ENCODE measurements at regions of chr5 and their contacts with region 1.

Region 1: GRCh38 chr5:110838965-110839364 is 100.2 kb downstream of the SLC25A46 start:
- DNase-seq: no peak
- H3K4me3 ChIP-seq: no peak overlapping the region
- H3K27ac ChIP-seq: no peak overlapping the region
- H3K4me1 ChIP-seq: no peaks in the 10 kb centered on the region
- CTCF ChIP-seq: no peak

Region 2: DNA sequence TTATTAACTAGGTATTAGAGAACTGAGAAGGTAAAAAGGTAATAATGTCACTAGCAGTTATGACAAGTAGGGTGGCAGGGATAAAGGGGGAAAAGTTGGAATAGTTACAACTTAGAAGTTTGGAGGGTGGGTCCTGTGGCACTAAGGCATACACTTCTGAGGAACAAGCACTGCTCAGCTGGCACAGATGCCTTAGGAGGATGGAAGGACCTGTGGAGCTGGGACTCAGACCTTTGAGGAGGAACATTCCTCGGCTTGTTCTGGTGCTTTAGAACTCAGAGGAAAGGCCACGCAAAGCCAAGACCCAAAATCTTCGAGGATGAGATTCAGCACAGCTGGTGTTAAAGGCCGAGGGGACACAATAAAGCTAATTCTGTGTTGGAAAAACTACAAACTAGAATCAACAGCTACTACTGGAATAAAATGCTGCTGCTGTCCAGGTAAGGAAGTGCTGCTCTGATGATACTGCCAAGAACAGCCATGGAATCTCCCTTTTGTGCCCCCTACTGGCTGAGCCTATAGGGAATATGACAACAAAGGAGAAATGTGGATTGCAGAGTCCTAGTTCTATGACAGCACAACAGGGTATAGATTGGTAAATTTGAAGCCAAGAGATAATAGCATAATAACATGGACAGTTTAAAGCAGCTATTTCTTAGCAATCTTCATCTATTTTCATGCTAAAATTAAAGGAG is 26.6 kb after region 1 on chr5:
- CTCF ChIA-PET with region 1: no interaction called
- POLR2A ChIA-PET with region 1: interaction called, 5 read pairs
- intact Hi-C with region 1: loop called (anchors 1 kb)
- DNase-seq: peak; percentile 15
- H3K4me3 ChIP-seq: no peak overlapping the region
- H3K27ac ChIP-seq: no peak overlapping the region
- H3K4me1 ChIP-seq: no peaks in the 10 kb centered on the region
- CTCF ChIP-seq: peak; percentile 70

Region 3: DNA sequence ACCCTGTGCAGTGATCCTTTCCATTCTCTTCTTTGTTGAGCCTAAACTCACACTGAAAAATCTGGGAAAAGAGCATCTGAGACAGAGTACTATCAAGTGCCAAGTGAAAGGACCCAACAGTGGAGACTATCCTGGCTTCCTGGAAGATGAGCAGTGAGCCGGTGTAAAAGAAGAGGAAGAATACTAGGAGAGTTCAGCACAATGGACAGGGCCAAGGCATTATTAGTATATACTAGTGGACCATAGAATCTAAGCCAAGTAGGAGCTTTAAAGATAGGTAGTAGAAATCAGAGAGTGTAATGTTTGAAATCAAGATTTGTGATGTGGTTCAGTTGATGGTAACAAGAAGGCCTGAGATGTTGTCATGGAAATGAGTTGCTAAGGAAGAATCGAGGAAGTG is 526.0 kb after region 1 on chr5:
- CTCF ChIA-PET with region 1: no interaction called
- POLR2A ChIA-PET with region 1: no interaction called
- intact Hi-C with region 1: no loop called
- DNase-seq: no peak
- H3K4me3 ChIP-seq: no peak overlapping the region
- H3K27ac ChIP-seq: no peak overlapping the region
- H3K4me1 ChIP-seq: no peaks in the 10 kb centered on the region
- CTCF ChIP-seq: no peak

Measured in OCI-LY7 (cell line).